Activated CD4-positive, alpha-beta memory T cell treated with anti-CD3 and anti-CD28 coated beads for 36 hours (primary cell): ENCODE measurements at regions of chr17 and their contacts with region 1.

Region 1: GRCh38 chr17:48878918-48879898 is 13.4 kb upstream of the ATP5MC1 start:
- DNase-seq: peak; percentile 64
- H3K4me3 Mint-ChIP-seq: no peak overlapping the region
- H3K27ac Mint-ChIP-seq: no peak overlapping the region
- H3K4me1 Mint-ChIP-seq: no peaks in the 10 kb centered on the region
- H3K27me3 Mint-ChIP-seq: peaks cover 5% of the 10 kb centered on the region

Region 2: DNA sequence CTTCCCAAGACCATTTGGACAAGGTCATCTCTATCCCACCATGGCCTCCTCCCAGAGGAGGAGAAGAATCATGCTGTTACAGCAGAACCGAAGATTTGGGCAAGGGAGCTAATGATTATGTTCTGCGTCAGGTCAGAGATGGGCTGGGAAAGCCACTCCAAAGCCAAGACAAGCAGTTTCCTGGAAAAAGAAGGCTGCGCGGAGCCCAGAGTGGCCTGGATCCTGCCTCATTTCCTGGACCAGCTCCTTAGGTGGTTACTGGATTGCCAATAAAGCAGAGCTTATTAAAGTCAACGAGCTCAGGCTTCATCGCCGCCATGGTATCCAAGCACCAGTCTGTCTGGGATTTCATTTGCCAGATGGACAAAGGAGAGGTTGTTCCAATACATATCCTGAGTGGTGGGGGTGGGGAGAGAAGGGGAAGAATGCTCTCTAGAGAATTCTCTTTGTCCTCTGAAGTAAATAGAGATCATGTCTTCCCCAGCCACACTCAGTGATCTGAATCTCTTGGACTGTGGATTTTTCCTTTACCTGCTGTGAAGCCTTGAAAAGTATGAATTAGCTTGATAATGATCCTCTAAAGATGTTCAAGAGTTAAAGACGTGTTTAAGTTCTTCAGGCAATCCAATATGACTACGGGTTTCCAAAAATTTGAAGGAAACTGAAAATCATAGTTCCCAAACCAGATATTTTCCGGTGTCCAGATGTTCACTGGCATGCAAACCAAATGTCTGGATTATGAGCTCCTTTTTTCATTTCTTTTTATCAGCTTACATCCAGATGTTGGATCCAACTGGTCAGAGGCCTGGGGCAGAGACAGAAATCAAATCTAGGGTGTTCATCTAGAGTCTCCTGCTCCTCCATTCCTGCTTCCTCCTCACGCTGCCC is 174.6 kb before region 1 on chr17:
- CTCF ChIA-PET with region 1: interaction called, 11 read pairs
- POLR2A ChIA-PET with region 1: no interaction called
- intact Hi-C with region 1: no loop called
- DNase-seq: no peak
- H3K4me3 Mint-ChIP-seq: no peak overlapping the region
- H3K27ac Mint-ChIP-seq: no peak overlapping the region
- H3K4me1 Mint-ChIP-seq: no peaks in the 10 kb centered on the region
- H3K27me3 Mint-ChIP-seq: peaks cover 48% of the 10 kb centered on the region

Region 3: DNA sequence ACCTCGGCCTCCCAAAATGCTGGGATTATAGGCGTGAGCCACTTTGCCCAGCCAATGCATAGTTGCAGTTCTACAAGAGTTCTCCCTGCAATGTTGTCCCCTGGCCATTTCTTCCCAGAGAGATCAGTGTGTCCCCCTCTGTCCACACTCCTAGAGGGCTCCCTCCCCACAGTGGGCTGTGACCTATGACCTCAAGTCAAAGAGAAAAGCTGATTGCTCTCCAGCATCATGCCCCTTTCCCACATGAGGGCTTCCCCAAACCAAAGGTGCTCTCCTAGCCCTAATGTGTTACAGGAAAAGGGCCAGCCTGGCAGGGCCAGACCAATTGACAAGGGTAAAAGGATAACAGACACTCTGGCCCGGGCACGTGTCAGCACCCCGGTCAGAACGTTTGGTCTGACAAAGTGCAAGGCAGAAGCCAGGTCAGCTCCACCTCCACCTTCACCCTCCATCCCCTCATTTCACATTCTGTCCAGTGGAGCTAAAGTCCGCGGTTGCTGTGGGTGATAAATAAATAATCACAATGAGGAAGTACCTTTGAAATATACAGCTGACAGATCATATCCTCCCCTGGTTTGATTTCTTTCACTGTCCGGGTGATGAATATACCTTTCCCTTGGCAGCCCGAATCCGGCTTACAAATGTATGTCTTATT is 80.0 kb before region 1 on chr17:
- CTCF ChIA-PET with region 1: interaction called, 614 read pairs
- POLR2A ChIA-PET with region 1: no interaction called
- intact Hi-C with region 1: no loop called
- DNase-seq: no peak
- H3K4me3 Mint-ChIP-seq: no peak overlapping the region
- H3K27ac Mint-ChIP-seq: no peak overlapping the region
- H3K4me1 Mint-ChIP-seq: no peaks in the 10 kb centered on the region
- H3K27me3 Mint-ChIP-seq: peaks cover 24% of the 10 kb centered on the region

Region 4: DNA sequence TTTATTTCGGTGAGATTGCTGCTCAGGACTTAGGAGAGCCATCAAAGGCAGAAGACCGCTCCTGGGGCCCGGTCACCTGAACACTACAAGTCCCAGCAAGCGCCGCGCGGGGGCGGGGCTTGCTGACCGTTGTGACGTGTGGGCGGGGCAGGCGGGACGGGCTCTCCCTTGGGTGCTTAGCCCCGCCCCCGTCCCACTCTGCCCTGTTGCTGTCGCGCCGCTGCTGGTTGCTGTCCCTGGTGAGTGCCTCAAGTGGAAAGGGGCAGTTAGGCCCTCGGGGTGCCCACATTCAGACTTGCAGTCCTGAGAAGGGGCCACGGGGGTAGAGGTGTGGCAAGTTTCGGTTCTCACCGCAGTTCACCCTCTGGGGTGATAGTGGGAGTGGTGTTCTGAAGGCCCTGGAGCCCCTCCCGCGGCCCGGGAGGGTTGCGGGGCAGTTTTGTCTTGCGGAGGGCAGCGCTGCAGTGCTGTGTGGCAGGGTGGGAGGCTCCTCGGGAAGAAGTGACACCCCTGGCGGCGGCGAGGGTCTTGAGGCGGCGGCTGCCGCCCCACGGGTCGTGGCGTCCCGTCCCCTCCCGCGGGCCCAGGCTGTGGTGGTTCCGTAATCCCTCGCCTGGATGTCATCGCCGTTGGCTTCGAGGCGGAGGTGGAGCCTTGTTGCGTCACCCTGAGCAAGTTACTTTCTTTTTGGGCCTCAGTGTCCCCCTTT is 48.2 kb before region 1 on chr17 and contains the start of gene CALCOCO2:
- CTCF ChIA-PET with region 1: interaction called, 26 read pairs
- POLR2A ChIA-PET with region 1: no interaction called
- intact Hi-C with region 1: no loop called
- DNase-seq: peak; percentile 93
- H3K4me3 Mint-ChIP-seq: peak within 1 kb of the TSS; percentile 94
- H3K27ac Mint-ChIP-seq: peak within 1 kb of the TSS; percentile 87
- H3K4me1 Mint-ChIP-seq: peaks cover 42% of the 10 kb centered on the region
- H3K27me3 Mint-ChIP-seq: no peaks in the 10 kb centered on the region
- total RNA-seq, gene CALCOCO2: 65.1 to 72.1 TPM

Region 5: GRCh38 chr17:48892940-48893645 is 13.9 kb after region 1 on chr17:
- CTCF ChIA-PET with region 1: interaction called, 25 read pairs
- POLR2A ChIA-PET with region 1: no interaction called
- intact Hi-C with region 1: no loop called
- DNase-seq: peak; percentile 24
- H3K4me3 Mint-ChIP-seq: peak overlapping the region; percentile 98
- H3K27ac Mint-ChIP-seq: peak overlapping the region; percentile 96
- H3K4me1 Mint-ChIP-seq: peaks cover 34% of the 10 kb centered on the region
- H3K27me3 Mint-ChIP-seq: no peaks in the 10 kb centered on the region